ENCODE measurements at regions of chr5 and their contacts with region 1.

Region 1: DNA sequence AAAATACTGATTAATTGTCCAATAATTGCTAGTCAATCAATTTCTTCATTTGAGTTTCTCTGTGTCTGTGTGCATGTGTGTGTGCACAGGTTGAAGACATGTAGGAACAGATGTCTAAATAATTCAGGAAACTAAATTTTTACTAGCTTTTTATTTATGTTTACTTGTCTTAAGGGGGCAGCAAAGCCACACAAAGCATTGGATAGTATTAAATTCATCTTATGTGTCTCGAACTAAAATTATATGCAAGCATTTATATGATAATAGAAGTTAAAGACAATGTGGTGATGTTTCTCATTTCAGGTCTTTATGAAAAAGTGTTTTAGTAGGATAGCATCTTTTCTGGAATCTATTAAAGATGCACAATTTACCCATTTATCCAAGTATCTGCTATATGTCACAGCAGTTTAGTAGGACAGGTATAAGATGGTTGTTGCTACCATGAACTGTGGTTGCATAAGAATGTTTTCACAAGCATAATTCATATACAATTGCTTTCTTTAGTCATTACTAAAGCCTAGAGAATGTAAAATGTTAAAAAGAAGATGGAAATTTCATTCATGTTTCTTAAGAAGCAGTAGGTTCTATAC is 784.6 kb upstream of the NUDT12 start:
- DNase-seq: no peak
- ATAC-seq: no peak
- H3K4me3 ChIP-seq: no peak overlapping the region
- H3K27ac ChIP-seq: no peak overlapping the region
- H3K4me1 ChIP-seq: no peaks in the 10 kb centered on the region
- H3K27me3 ChIP-seq: no peaks in the 10 kb centered on the region
- CTCF ChIP-seq: peak; percentile 22
- EP300 ChIP-seq: no peak
- POLR2A ChIP-seq: no peak
- RAD21 ChIP-seq: no peak

Region 2: GRCh38 chr5:104130320-104130719 is 216.9 kb before region 1 on chr5:
- CTCF ChIA-PET with region 1: no interaction called
- POLR2A ChIA-PET with region 1: no interaction called
- in situ Hi-C with region 1: no loop called
- intact Hi-C with region 1: no loop called
- DNase-seq: no peak
- ATAC-seq: no peak
- H3K4me3 ChIP-seq: no peak overlapping the region
- H3K27ac ChIP-seq: no peak overlapping the region
- H3K4me1 ChIP-seq: no peaks in the 10 kb centered on the region
- H3K27me3 ChIP-seq: no peaks in the 10 kb centered on the region
- CTCF ChIP-seq: no peak
- EP300 ChIP-seq: no peak
- POLR2A ChIP-seq: no peak
- RAD21 ChIP-seq: no peak

Region 3: DNA sequence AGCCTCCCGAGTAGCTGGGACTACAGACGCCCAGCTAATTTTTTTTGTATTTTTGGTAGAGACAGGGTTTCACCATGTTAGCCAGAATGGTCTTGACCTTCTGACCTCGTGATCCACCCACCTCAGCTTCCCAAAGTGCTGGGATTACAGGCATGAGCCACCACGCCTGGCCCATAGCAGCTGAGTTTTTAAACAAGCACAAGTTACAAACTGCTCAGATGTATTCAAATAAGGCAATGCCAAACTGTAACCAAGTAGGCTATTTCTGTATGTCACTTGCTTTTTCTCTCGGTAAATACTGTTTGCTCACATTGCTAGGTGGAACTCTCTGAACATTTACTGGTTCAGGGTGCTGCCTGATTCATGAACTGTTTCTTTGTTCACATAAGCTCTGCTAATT is 14.7 kb after region 1 on chr5:
- CTCF ChIA-PET with region 1: no interaction called
- POLR2A ChIA-PET with region 1: no interaction called
- in situ Hi-C with region 1: no loop called
- intact Hi-C with region 1: no loop called
- DNase-seq: no peak
- ATAC-seq: no peak; the same call in 2 of the 3 replicates
- H3K4me3 ChIP-seq: no peak overlapping the region
- H3K27ac ChIP-seq: no peak overlapping the region
- H3K4me1 ChIP-seq: no peaks in the 10 kb centered on the region; the same call in 1 of the 2 replicates
- H3K27me3 ChIP-seq: no peaks in the 10 kb centered on the region
- CTCF ChIP-seq: no peak
- EP300 ChIP-seq: no peak
- POLR2A ChIP-seq: no peak
- RAD21 ChIP-seq: no peak

Region 4: DNA sequence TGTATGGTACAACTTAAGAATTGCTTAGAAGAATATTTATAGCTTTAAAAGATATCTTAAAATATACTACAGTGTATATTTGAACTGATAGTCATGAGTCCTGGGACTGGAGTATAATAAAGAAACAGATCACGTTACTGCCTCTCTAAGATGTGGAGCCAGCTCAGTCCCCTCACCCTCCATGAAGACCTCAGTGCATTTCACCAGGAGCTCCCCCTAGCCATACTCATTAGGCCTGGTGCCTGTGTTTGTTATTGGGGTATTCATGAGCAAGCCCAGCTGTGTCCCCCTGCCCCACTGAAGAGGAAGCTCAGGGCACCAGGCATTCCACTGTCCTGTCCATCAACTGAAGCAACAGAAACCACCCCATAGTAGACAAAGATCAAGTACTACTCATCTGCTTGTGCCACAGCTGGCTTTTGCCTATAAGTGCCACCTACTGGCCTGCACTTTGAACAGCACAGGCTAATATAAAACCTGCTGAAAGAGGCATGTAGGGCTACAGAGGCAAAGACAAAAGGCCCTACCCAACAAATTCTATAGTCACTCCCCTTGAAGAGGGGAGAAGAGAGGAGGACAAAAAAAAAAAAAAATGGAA is 65.5 kb after region 1 on chr5:
- CTCF ChIA-PET with region 1: no interaction called
- POLR2A ChIA-PET with region 1: no interaction called
- in situ Hi-C with region 1: no loop called
- intact Hi-C with region 1: loop called (anchors 2 kb)
- DNase-seq: peak; percentile 20
- ATAC-seq: peak; percentile 91
- H3K4me3 ChIP-seq: no peak overlapping the region
- H3K27ac ChIP-seq: no peak overlapping the region
- H3K4me1 ChIP-seq: no peaks in the 10 kb centered on the region
- H3K27me3 ChIP-seq: no peaks in the 10 kb centered on the region
- CTCF ChIP-seq: peak; percentile 57
- EP300 ChIP-seq: no peak
- POLR2A ChIP-seq: no peak
- RAD21 ChIP-seq: no peak

Region 5: GRCh38 chr5:104800436-104801048 is 453.3 kb after region 1 on chr5:
- CTCF ChIA-PET with region 1: no interaction called
- POLR2A ChIA-PET with region 1: no interaction called
- in situ Hi-C with region 1: no loop called
- intact Hi-C with region 1: loop called (anchors 1 kb)
- DNase-seq: peak; percentile 26
- ATAC-seq: peak; percentile 51
- H3K4me3 ChIP-seq: no peak overlapping the region
- H3K27ac ChIP-seq: no peak overlapping the region
- H3K4me1 ChIP-seq: no peaks in the 10 kb centered on the region
- H3K27me3 ChIP-seq: no peaks in the 10 kb centered on the region; a peak in 1 of 5 replicates
- CTCF ChIP-seq: peak; percentile 62
- EP300 ChIP-seq: no peak
- POLR2A ChIP-seq: no peak
- RAD21 ChIP-seq: no peak

Region 6: DNA sequence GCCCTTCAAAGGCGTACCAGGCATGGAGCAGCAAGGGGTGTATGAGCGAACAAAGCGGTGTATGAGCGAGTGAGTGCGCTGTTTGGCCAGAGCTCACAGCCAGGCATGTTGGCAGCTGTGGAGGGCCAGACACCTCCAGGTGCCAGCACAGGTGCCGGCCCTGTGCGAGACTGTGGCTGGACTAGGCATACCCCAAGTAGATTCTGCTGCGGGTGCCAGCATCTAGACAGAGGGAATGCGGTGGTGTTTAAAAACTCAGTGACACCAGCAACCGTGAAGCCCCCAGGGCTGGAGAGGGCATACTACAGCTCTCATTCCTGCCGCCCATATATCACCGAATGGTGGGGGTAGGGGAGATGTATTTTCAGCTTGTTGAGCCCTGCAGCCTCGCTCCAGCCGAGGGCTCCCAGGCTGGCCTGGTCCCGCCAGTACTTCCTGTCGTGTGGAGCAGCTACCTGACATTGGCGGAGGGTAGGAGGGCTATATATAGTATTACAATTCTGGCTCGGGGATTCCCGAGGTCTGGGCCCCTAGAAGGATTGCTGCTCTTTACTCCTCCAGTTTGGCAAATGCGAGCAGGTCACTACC is 1045.0 kb after region 1 on chr5:
- CTCF ChIA-PET with region 1: no interaction called
- POLR2A ChIA-PET with region 1: no interaction called
- in situ Hi-C with region 1: no loop called
- intact Hi-C with region 1: no loop called
- DNase-seq: peak; percentile 2
- ATAC-seq: peak; percentile 92
- H3K4me3 ChIP-seq: peak overlapping the region; percentile 47 to 61 (median 60); a peak in 5 of 6 replicates
- H3K27ac ChIP-seq: peak overlapping the region; percentile 40
- H3K4me1 ChIP-seq: no peaks in the 10 kb centered on the region
- H3K27me3 ChIP-seq: no peaks in the 10 kb centered on the region
- CTCF ChIP-seq: no peak
- EP300 ChIP-seq: no peak
- POLR2A ChIP-seq: no peak
- RAD21 ChIP-seq: no peak